Calu3 (cell line): ENCODE measurements at regions of chr7 and their contacts with region 1.

Region 1: GRCh38 chr7:17523813-17524741 is 225.6 kb downstream of the AHR start:
- DNase-seq: peak; percentile 73
- H3K4me3 Mint-ChIP-seq: peak overlapping the region; percentile 33
- H3K27ac Mint-ChIP-seq: peak overlapping the region; percentile 96
- H3K4me1 Mint-ChIP-seq: peaks cover 82% of the 10 kb centered on the region
- H3K27me3 Mint-ChIP-seq: no peaks in the 10 kb centered on the region
- CTCF ChIP-seq: no peak

Region 2: GRCh38 chr7:16926283-16926682 is 597.8 kb before region 1 on chr7:
- CTCF ChIA-PET with region 1: no interaction called
- intact Hi-C with region 1: loop called (anchors 5 kb)
- DNase-seq: peak; percentile 57
- H3K4me3 Mint-ChIP-seq: no peak overlapping the region
- H3K27ac Mint-ChIP-seq: peak overlapping the region; percentile 48
- H3K4me1 Mint-ChIP-seq: peaks cover 78% of the 10 kb centered on the region
- H3K27me3 Mint-ChIP-seq: no peaks in the 10 kb centered on the region
- CTCF ChIP-seq: peak; percentile 72

Region 3: GRCh38 chr7:17205910-17206905 is 317.9 kb before region 1 on chr7:
- CTCF ChIA-PET with region 1: no interaction called
- intact Hi-C with region 1: no loop called
- DNase-seq: peak; percentile 93
- H3K4me3 Mint-ChIP-seq: peak overlapping the region; percentile 13
- H3K27ac Mint-ChIP-seq: peak overlapping the region; percentile 93
- H3K4me1 Mint-ChIP-seq: peaks cover 68% of the 10 kb centered on the region
- H3K27me3 Mint-ChIP-seq: no peaks in the 10 kb centered on the region
- CTCF ChIP-seq: no peak

Region 4: DNA sequence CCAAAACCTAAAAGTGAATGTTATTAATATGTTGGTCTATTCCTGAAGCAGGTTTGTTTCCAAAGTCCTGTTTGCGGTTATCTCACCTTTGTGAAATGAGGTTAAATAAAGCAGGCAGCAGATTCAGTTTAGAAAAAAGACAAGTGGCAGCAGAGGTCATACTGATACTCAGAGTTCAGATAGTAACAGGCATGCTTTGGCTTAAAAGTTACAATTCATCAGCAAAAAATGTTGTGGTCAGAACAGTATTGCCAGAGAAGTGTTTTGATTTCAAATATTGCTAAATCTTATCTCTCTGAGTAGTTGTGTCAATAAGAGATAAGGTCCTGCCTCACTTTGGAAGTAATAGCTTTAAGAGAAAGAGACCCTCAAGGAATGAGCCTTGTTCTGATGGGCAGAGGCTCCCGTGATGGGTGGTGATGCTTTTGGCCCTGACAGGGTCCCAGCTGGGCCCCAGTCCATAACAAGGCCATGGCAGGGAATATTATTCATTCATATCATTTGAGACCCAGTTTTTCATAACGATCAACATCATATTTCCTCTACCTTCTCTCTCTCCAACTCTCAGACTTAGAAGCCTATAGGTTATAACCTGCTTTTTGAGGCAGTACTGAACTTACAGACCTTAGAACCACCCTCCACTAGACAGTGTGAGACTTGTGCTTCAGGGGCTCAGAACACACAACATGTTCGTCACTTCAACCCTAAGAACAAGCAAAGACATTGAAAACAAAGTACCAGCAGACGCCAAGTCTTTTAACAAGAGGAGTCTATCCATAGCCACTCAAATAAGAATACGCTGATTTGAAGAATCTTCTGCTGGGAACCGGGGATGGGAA is 284.2 kb before region 1 on chr7:
- CTCF ChIA-PET with region 1: no interaction called
- intact Hi-C with region 1: loop called (anchors 10 kb)
- DNase-seq: no peak
- H3K4me3 Mint-ChIP-seq: peak overlapping the region; percentile 4
- H3K27ac Mint-ChIP-seq: peak overlapping the region; percentile 19
- H3K4me1 Mint-ChIP-seq: peaks cover 57% of the 10 kb centered on the region
- H3K27me3 Mint-ChIP-seq: peaks cover 12% of the 10 kb centered on the region
- CTCF ChIP-seq: no peak

Region 5: DNA sequence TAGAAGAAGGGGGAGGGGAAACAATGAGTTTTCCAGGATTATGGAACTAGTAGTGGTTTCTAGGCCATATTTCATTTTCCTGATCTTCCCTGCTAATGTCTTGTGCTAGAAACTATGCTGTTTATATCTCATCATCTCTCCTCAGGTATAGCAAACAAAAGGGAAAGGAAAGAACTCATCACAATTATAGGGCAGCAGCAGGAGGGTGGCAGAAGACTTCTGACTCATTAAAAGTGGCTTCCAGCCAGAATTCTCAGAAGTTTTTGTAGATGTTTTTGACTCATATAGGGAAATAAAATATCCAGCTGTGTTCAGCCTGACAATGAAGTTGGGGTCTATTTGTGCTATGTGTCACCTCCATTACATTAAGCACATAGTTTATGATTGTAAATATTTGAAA is 219.2 kb before region 1 on chr7:
- CTCF ChIA-PET with region 1: interaction called, 9 read pairs
- intact Hi-C with region 1: loop called (anchors 2 kb)
- DNase-seq: peak; percentile 71
- H3K4me3 Mint-ChIP-seq: no peak overlapping the region
- H3K27ac Mint-ChIP-seq: no peak overlapping the region
- H3K4me1 Mint-ChIP-seq: no peaks in the 10 kb centered on the region
- H3K27me3 Mint-ChIP-seq: no peaks in the 10 kb centered on the region
- CTCF ChIP-seq: no peak

Region 6: DNA sequence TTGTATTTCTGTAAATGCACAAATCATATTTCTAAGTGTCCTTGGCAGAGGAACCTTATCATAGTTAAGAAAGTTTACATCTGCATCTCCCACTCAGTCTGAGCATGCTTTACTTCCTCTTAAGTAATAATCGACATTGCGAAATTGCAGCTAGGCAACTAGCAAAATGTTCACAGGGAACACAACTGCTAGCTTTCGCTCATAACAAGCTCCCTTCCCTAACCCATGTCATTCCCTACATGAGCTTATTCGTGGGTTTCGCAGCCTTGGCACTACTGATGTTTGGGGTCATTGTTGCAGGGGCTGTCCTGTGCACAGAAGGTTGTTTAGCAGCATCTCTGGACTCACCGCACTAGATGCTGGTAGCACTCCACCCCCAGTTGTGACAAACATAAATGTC is 154.0 kb before region 1 on chr7:
- CTCF ChIA-PET with region 1: interaction called, 6 read pairs
- intact Hi-C with region 1: loop called (anchors 1 kb)
- DNase-seq: peak; percentile 69
- H3K4me3 Mint-ChIP-seq: peak overlapping the region; percentile 22
- H3K27ac Mint-ChIP-seq: peak overlapping the region; percentile 92
- H3K4me1 Mint-ChIP-seq: peaks cover 71% of the 10 kb centered on the region
- H3K27me3 Mint-ChIP-seq: no peaks in the 10 kb centered on the region
- CTCF ChIP-seq: no peak

Region 7: GRCh38 chr7:17408245-17408903 is 115.7 kb before region 1 on chr7:
- CTCF ChIA-PET with region 1: interaction called, 4 read pairs
- intact Hi-C with region 1: loop called (anchors 2 kb)
- DNase-seq: peak; percentile 85
- H3K4me3 Mint-ChIP-seq: peak overlapping the region; percentile 24
- H3K27ac Mint-ChIP-seq: peak overlapping the region; percentile 82
- H3K4me1 Mint-ChIP-seq: peaks cover 53% of the 10 kb centered on the region
- H3K27me3 Mint-ChIP-seq: no peaks in the 10 kb centered on the region
- CTCF ChIP-seq: no peak

Region 8: GRCh38 chr7:17444673-17445072 is 79.4 kb before region 1 on chr7:
- CTCF ChIA-PET with region 1: no interaction called
- intact Hi-C with region 1: loop called (anchors 2 kb)
- DNase-seq: peak; percentile 53
- H3K4me3 Mint-ChIP-seq: peak overlapping the region; percentile 20
- H3K27ac Mint-ChIP-seq: peak overlapping the region; percentile 74
- H3K4me1 Mint-ChIP-seq: peaks cover 71% of the 10 kb centered on the region
- H3K27me3 Mint-ChIP-seq: no peaks in the 10 kb centered on the region
- CTCF ChIP-seq: no peak